Activated CD4-positive, alpha-beta memory T cell treated with anti-CD3 and anti-CD28 coated beads for 36 hours (primary cell): ENCODE measurements at regions of chr19 and their contacts with region 1.

Region 1: GRCh38 chr19:4815426-4816201 is 15.9 kb downstream of the TICAM1 start:
- DNase-seq: peak; percentile 81
- H3K4me3 Mint-ChIP-seq: peak overlapping the region; percentile 55
- H3K27ac Mint-ChIP-seq: peak overlapping the region; percentile 57
- H3K4me1 Mint-ChIP-seq: peaks cover 25% of the 10 kb centered on the region
- H3K27me3 Mint-ChIP-seq: no peaks in the 10 kb centered on the region

Region 2: DNA sequence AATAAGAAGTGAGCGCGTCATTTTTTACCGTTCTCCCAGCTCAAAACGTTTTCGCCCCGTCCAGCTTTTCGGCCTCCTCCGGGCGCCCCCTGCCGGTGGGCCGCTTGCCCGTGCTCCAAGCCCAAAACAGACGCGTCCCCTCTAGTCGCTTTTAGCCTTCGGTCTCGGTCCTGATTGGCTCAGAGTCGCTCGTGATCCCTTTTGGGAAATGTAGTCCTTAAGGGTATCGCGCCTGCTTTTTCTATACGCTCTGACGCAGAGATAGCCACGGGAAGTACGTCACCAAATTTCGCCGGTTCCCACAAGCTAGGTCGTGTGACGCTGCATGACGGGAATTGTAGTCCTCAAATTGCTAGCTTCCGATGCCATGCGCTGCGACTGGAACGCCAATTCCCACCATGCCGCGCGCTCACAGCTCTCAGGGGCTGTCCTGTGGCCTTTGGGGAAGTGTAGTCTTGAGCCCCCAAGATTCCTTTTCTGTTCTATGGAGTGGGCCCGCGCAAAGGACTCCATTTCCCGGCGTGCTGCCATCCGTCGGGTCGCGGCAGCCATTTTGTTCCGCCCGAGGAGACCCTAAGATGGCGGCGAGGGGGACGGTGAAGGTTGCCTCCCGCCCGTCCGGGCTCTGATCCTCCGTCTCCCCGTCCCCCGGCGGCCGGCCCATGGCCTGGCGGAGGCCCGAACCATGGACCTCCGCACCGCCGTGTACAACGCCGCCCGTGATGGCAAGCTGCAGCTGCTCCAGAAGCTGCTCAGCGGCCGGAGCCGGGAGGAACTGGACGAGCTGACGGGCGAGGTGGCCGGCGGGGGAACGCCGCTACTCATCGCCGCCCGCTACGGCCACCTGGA is 24.2 kb before region 1 on chr19 and contains the start of gene FEM1A:
- CTCF ChIA-PET with region 1: interaction called, 17 read pairs
- POLR2A ChIA-PET with region 1: no interaction called
- intact Hi-C with region 1: no loop called
- DNase-seq: peak; percentile 99
- H3K4me3 Mint-ChIP-seq: peak within 1 kb of the TSS; percentile 80
- H3K27ac Mint-ChIP-seq: peak within 1 kb of the TSS; percentile 81
- H3K4me1 Mint-ChIP-seq: peaks cover 38% of the 10 kb centered on the region
- H3K27me3 Mint-ChIP-seq: no peaks in the 10 kb centered on the region
- total RNA-seq, gene FEM1A: 9.2 to 9.3 TPM

Region 3: DNA sequence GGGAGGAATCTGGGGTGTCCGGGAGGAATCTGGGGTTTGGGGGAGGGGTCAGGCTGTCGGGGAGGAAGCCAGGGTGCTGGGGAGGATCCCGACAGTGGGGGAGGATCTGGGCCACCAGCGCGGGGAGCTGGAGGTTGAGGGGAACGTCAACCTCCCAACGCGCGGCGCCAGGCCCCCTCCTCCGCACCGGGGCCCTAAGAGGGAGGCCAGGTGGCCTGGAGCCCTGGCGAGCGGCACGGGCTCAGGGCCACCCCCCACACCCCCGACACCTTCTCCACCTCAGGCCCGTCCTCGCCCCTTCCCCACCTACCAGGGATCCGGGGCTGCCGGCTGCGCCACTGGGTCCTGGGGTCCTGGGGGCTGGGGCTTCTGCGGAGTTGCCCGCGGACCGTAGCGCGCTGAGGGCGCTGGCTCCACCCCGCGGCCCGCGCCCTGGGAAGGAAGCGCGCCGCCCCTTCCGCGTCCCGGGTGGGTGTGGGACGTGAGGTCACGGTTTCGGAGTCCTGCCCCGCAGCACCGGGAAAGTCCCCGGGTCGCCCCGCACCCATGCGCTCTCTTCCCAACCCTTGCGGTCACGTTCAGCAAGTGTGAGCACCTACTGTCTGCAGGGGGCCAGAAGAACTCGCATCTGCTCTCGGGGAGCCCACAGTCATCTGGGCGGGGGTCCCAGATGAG is 15.8 kb after region 1 on chr19 and contains the start of gene TICAM1:
- CTCF ChIA-PET with region 1: interaction called, 7 read pairs
- POLR2A ChIA-PET with region 1: interaction called, 6 read pairs
- intact Hi-C with region 1: loop called (anchors 2 kb)
- DNase-seq: peak; percentile 86
- H3K4me3 Mint-ChIP-seq: peak within 1 kb of the TSS; percentile 88
- H3K27ac Mint-ChIP-seq: peak within 1 kb of the TSS; percentile 90
- H3K4me1 Mint-ChIP-seq: peaks cover 19% of the 10 kb centered on the region
- H3K27me3 Mint-ChIP-seq: no peaks in the 10 kb centered on the region
- total RNA-seq, gene TICAM1: 24.0 to 25.4 TPM

Region 4: GRCh38 chr19:4851551-4852290 is 36.1 kb after region 1 on chr19:
- CTCF ChIA-PET with region 1: interaction called, 395 read pairs
- POLR2A ChIA-PET with region 1: no interaction called
- intact Hi-C with region 1: no loop called
- DNase-seq: peak; percentile 81
- H3K4me3 Mint-ChIP-seq: no peak overlapping the region
- H3K27ac Mint-ChIP-seq: peak overlapping the region; percentile 38
- H3K4me1 Mint-ChIP-seq: peaks cover 2% of the 10 kb centered on the region
- H3K27me3 Mint-ChIP-seq: no peaks in the 10 kb centered on the region

Region 5: DNA sequence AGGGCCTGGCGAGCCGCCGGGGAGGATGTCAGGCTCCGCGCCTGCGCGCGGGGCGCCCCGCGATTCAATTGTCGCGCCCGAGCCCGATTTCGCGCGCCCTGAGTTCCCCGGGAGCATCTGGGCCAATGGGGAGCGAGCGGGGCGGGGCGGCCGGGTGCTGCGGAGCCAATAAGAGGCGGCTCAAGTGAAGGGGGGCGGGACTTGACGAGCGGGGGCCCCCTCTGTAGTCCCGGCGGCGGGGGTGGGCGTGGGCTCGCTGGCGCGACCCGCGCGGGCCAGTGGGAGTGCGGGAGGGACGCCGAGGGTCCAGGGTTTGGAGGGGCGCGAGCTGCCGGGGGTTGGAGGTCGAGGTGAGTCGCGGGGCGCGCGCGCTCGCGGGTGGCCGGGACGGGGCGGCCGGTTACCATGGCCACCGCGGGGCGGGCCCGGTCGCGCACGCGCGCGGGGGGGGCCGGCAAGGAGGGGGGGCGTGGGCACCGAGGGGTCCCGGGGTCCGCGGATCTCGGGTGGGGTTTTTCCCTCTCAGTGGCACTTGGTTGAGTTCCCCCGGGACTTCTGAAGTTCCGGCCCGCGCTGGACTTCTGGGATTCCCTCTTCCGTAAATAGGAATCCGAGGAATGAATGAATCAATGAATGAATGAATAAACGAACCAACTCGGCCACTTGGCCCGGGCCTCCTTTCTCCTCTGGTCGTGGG is 94.4 kb after region 1 on chr19:
- CTCF ChIA-PET with region 1: interaction called, 85 read pairs
- POLR2A ChIA-PET with region 1: interaction called, 3 read pairs
- intact Hi-C with region 1: loop called (anchors 2 kb)
- DNase-seq: peak; percentile 97
- H3K4me3 Mint-ChIP-seq: peak overlapping the region; percentile 89
- H3K27ac Mint-ChIP-seq: peak overlapping the region; percentile 65
- H3K4me1 Mint-ChIP-seq: peaks cover 50% of the 10 kb centered on the region
- H3K27me3 Mint-ChIP-seq: no peaks in the 10 kb centered on the region